ENCODE measurements at regions of chr1 and their contacts with region 1.

Region 1: DNA sequence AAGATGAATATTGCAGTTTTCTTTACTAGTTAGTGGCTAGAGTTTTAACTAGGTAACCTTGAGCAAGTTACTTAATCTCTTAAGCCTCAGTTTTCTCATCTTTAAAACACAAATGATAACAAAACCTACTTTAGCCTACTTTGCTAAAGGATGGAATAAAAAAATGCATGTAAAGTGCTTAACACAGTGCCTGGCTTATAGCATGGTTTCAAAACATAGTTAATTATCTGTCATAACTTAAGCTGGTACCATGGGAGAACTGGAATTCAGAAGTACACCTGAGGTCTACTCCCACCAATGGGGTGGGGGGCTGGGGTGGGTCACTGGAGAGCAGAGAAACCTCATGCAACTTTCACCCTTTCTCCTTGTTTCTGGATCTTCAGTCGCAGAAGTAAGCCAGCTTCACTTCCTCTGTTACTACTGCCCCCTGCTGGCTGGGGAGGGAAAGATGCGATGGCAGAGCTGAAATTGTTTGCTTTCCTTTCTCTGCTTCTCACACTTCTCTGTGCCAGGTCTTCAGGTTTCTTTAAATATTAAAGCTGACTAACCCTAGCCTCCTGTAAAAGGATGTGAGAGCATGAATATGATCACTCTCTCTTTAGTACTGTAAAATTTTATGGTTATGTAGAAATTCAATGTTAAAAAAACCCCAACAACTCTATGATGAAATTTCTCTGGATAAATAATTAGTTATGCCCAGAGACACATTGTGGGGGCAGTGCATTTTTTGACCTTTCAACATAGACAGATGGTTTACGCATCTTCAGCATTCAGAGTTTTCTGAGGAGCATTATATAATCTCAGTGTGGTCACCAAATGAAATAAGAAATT is 324.2 kb downstream of the HLX start:
- DNase-seq: peak; percentile 43 to 75
- H3K4me3 ChIP-seq: no peak overlapping the region
- H3K27ac ChIP-seq: no peak overlapping the region
- H3K4me1 ChIP-seq: no peaks in the 10 kb centered on the region
- H3K27me3 ChIP-seq: no peaks in the 10 kb centered on the region
- CTCF ChIP-seq: peak; percentile 90

Region 2: DNA sequence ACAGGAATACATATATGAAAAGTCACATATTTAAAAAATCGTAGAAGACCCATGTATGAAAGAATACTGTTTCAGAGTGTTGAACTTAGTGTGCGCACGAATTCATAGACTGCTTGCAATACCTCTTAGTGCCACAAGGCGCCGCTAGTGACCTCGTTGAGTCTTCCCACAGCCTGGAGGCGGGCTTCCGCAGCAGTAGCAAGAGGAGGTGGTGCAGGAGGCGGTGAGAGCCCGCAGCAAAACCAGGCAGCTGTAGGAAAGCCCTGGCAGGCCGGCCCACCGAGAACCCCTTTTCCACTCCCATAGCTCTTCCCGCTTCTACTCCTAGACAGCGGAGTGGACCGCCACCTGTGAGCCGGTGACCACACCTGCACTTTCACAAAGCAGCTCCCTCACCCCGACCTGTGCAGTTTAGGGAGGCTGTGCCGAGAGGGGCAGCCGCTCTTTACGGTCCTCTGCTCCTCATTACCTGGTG is 393.2 kb before region 1 on chr1:
- CTCF ChIA-PET with region 1: interaction called, 3 read pairs
- POLR2A ChIA-PET with region 1: no interaction called
- intact Hi-C with region 1: loop called (anchors 2 kb)
- DNase-seq: peak in 1 of 2 experiments; percentile 31
- H3K4me3 ChIP-seq: no peak overlapping the region
- H3K27ac ChIP-seq: no peak overlapping the region
- H3K4me1 ChIP-seq: no peaks in the 10 kb centered on the region
- H3K27me3 ChIP-seq: no peaks in the 10 kb centered on the region
- CTCF ChIP-seq: peak; percentile 87

Region 3: GRCh38 chr1:220873868-220874655 is 329.4 kb before region 1 on chr1:
- CTCF ChIA-PET with region 1: no interaction called
- POLR2A ChIA-PET with region 1: no interaction called
- intact Hi-C with region 1: loop called (anchors 1 kb)
- DNase-seq: peak in 1 of 2 experiments; percentile 35
- H3K4me3 ChIP-seq: no peak overlapping the region
- H3K27ac ChIP-seq: no peak overlapping the region
- H3K4me1 ChIP-seq: no peaks in the 10 kb centered on the region
- H3K27me3 ChIP-seq: no peaks in the 10 kb centered on the region
- CTCF ChIP-seq: peak; percentile 82

Region 4: DNA sequence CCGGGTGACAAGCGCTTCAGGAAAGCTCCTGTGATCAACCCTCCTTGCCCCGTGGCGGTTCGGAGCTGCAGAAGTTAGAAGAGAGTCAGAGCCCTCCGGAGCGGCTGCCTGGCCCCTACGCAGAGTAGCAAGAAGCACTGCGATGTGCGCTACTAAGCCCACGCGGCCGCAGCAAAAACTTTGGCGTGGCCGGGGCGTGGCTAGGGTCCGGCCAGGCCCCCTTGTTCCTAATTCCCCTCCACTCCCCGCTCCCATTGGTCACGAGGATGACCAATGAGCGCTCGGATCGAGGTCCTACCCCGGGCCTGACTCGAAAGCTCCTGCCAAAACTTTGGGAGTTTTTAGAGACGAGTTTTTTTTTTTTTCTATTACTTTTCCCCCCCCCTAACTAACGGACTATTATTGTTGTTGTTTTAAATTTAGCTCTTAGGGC is 324.3 kb before region 1 on chr1 and contains the start of gene HLX:
- CTCF ChIA-PET with region 1: no interaction called
- POLR2A ChIA-PET with region 1: no interaction called
- intact Hi-C with region 1: loop called (anchors 1 kb)
- DNase-seq: peak; percentile 51 to 58
- H3K4me3 ChIP-seq: peak within 1 kb of the TSS; percentile 93
- H3K27ac ChIP-seq: no peak within 1 kb of the TSS
- H3K4me1 ChIP-seq: peaks cover 6% of the 10 kb centered on the region
- H3K27me3 ChIP-seq: no peaks in the 10 kb centered on the region
- CTCF ChIP-seq: no peak
- total RNA-seq, gene HLX: 1.1 and 1.8 TPM in 2 replicates

Region 5: DNA sequence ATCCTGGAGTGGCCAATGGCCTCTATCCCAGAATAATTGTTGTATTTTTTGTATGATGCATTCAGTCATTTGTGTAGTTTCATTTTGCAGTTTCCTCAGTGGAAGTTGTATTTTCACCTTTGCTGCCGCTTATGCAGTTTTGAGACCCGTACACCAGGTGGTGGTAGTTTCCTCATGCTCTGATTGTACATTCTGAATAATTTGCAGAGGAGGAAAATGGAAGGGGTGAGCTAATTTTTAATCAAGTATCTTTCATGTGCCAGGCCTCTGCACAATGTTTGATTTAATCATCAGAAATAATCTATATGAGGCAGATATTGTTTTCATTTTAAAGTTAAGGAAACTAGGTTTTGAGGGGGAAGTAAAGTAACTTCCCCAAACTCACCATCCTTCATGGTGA is 294.7 kb before region 1 on chr1:
- CTCF ChIA-PET with region 1: no interaction called
- POLR2A ChIA-PET with region 1: no interaction called
- intact Hi-C with region 1: loop called (anchors 10 kb)
- DNase-seq: no peak
- H3K4me3 ChIP-seq: no peak overlapping the region
- H3K27ac ChIP-seq: no peak overlapping the region
- H3K4me1 ChIP-seq: peaks cover 22% of the 10 kb centered on the region
- H3K27me3 ChIP-seq: no peaks in the 10 kb centered on the region
- CTCF ChIP-seq: peak; percentile 54; the same call in 1 of the 2 replicates

Region 6: GRCh38 chr1:221230605-221231004 is 27.2 kb after region 1 on chr1:
- CTCF ChIA-PET with region 1: interaction called, 10 read pairs
- POLR2A ChIA-PET with region 1: no interaction called
- intact Hi-C with region 1: no loop called
- DNase-seq: peak in 1 of 2 experiments; percentile 70
- H3K4me3 ChIP-seq: no peak overlapping the region
- H3K27ac ChIP-seq: no peak overlapping the region
- H3K4me1 ChIP-seq: peaks cover 10% of the 10 kb centered on the region; the same call in 1 of the 2 replicates
- H3K27me3 ChIP-seq: no peaks in the 10 kb centered on the region
- CTCF ChIP-seq: no peak